ENCODE measurements at regions of chr3 and their contacts with region 1.

Region 1: GRCh38 chr3:32313723-32314473 is 75.4 kb downstream of the CMTM8 start:
- DNase-seq: peak; percentile 10
- H3K4me3 Mint-ChIP-seq: peak overlapping the region; percentile 69
- H3K27ac Mint-ChIP-seq: peak overlapping the region; percentile 78
- H3K4me1 Mint-ChIP-seq: peaks cover 45% of the 10 kb centered on the region
- H3K27me3 Mint-ChIP-seq: no peaks in the 10 kb centered on the region

Region 2: DNA sequence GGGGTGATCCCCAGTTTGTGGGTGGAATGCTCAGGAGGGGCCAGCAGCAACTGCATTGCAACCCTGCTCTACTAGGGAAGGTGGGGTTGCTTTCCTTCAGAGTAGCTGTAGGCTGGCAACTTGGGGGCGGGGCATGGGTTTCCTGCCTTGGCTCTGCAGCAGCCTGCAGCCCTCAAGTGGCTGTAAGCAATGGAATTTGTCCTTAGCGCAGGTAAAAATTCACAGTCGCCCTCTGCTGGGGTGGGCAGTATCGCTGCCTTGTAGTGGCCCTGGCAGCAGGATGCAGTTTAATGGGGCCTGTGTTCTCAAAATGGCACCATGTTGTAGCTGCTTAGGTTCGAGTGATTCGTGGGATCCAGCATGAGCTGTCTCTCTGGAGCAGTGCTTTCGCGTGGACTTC is 751.4 kb before region 1 on chr3:
- intact Hi-C with region 1: no loop called
- DNase-seq: peak; percentile 18
- H3K4me3 Mint-ChIP-seq: no peak overlapping the region
- H3K27ac Mint-ChIP-seq: no peak overlapping the region
- H3K4me1 Mint-ChIP-seq: peaks cover 81% of the 10 kb centered on the region
- H3K27me3 Mint-ChIP-seq: no peaks in the 10 kb centered on the region

Region 3: GRCh38 chr3:31895471-31895870 is 418.4 kb before region 1 on chr3:
- intact Hi-C with region 1: no loop called
- DNase-seq: no peak
- H3K4me3 Mint-ChIP-seq: no peak overlapping the region
- H3K27ac Mint-ChIP-seq: no peak overlapping the region
- H3K4me1 Mint-ChIP-seq: peaks cover 13% of the 10 kb centered on the region
- H3K27me3 Mint-ChIP-seq: peaks cover 4% of the 10 kb centered on the region

Region 4: GRCh38 chr3:32237670-32238452 is 76.0 kb before region 1 on chr3:
- intact Hi-C with region 1: no loop called
- DNase-seq: no peak
- H3K4me3 Mint-ChIP-seq: peak overlapping the region; percentile 70
- H3K27ac Mint-ChIP-seq: no peak overlapping the region
- H3K4me1 Mint-ChIP-seq: peaks cover 24% of the 10 kb centered on the region
- H3K27me3 Mint-ChIP-seq: peaks cover 31% of the 10 kb centered on the region

Region 5: GRCh38 chr3:32302601-32303398 is 11.1 kb before region 1 on chr3:
- intact Hi-C with region 1: loop called (anchors 1 kb)
- DNase-seq: no peak
- H3K4me3 Mint-ChIP-seq: peak overlapping the region; percentile 48
- H3K27ac Mint-ChIP-seq: peak overlapping the region; percentile 85
- H3K4me1 Mint-ChIP-seq: peaks cover 70% of the 10 kb centered on the region
- H3K27me3 Mint-ChIP-seq: no peaks in the 10 kb centered on the region

Region 6: DNA sequence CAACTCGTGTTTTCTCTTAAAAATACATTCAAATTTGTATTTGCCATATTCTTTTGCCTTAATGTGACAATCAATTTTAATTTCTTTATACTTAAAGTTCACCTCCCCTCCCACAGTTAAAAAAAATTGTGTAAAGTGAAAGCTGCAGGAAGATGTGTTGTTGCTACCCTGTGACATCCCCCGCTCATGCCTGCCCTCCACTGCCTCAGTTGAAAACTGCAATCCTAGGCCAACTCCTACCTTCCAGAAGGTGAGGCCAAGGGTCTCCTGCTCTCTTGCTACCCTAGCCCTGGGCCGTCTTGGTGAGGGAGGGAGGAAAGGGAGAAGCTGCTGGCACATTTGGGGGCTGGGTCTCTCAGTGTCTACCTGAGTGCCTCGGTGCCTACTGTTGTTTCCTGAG is 20.8 kb after region 1 on chr3:
- intact Hi-C with region 1: loop called (anchors 2 kb)
- DNase-seq: peak; percentile 45
- H3K4me3 Mint-ChIP-seq: no peak overlapping the region
- H3K27ac Mint-ChIP-seq: no peak overlapping the region
- H3K4me1 Mint-ChIP-seq: peaks cover 55% of the 10 kb centered on the region
- H3K27me3 Mint-ChIP-seq: no peaks in the 10 kb centered on the region

Region 7: GRCh38 chr3:32366638-32367397 is 52.9 kb after region 1 on chr3:
- intact Hi-C with region 1: no loop called
- DNase-seq: no peak
- H3K4me3 Mint-ChIP-seq: no peak overlapping the region
- H3K27ac Mint-ChIP-seq: peak overlapping the region; percentile 68
- H3K4me1 Mint-ChIP-seq: peaks cover 23% of the 10 kb centered on the region
- H3K27me3 Mint-ChIP-seq: no peaks in the 10 kb centered on the region

Measured in activated T-helper 1 cell treated with anti-CD3 and anti-CD28 coated beads, Interleukin-12 subunit alpha, Interleukin-12 subunit beta, Interleukin-2, Interleukin-4 antibody, amounts not matched to agents 30 ng/mL and 10 ng/mL and 1 ng/mL, durations not matched to agents 14 hours and 24 hours and 36 hours (primary cell).